ENCODE measurements at regions of chr6 and their contacts with region 1.

Region 1: DNA sequence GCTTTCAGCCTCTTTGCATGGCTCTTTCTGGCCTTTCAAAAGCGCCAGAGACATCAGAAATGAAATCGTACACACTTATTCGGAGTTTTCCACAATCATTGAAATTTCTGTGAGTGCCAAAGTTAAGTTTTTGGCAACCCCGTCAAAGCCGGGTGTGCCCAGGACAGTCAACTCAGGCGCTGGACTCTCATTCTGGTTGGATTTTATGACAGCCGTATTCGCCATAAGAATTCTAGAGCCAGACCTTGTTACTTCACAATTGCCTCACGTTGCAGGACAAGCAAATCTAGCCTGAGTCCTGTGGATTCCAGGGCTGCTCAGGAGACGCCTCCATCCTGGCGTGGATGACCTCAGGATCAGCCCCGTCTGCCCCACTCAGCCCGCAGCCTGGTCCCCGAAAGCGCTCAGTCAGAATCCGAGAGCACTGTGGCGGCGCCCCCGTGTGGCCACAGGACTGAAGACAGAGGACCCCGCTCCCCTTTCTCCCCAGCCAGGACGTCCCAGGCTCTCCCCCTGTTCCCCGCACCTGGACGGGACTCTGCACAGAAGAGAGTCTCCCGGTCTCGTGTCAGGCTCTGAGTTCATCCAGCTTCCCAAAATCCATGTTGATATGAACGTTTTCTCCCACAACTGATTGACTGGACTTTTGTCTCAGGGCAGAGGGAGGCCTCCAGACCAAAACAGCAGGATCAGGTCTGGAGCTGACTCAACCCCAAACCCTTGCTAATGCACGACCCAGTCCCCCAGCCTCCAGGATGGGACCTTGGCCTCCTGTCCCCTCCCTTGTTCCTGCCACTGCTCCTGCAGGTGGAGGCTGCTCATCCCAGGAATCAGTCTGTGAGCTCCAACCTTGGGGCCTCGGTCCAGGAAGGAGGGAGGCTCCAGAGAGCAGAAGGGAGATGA is 38.2 kb downstream of the MICA start:
- DNase-seq: peak in 1 of 2 donors; percentile 92
- H3K4me3 ChIP-seq: peak overlapping the region in 1 of 2 donors; percentile 44
- H3K27ac ChIP-seq: no peak overlapping the region
- H3K4me1 ChIP-seq: no peaks in the 10 kb centered on the region
- H3K27me3 ChIP-seq: no peaks in the 10 kb centered on the region
- CTCF ChIP-seq: peak; percentile 72 to 89 (median 77)

Region 2: DNA sequence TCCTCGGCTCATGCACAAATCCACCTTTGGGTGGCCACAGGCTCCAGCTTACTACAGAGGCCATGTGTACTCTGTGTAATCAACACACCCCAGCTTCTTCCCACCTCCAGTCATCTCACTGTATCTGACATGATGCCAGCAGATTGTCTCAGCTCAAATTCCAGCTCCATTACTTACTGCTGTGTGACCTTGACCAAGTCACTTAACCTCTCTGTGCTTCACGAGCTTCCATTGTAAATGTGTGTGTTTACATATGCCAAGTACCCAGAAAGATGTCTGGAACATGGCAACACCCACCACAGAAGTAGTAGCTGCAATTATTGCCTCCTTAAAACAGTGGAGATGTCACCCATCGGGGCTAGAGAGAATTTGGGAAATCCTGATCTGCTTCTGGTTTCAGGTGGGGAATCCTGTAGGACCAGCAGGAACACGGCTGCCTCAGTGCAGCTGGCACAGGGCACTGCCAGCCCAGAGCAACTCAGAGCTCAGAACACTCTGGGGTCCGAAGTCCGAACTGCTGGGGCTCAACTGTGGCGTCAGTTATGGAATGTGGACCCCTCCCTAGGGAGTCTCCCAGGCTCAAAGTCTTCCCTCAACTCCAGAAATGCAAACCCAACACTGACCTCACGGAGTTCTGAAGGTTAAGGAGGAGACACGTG is 63.4 kb before region 1 on chr6:
- intact Hi-C with region 1: no loop called
- DNase-seq: no peak
- H3K4me3 ChIP-seq: no peak overlapping the region
- H3K27ac ChIP-seq: no peak overlapping the region
- H3K4me1 ChIP-seq: no peaks in the 10 kb centered on the region
- H3K27me3 ChIP-seq: no peaks in the 10 kb centered on the region
- CTCF ChIP-seq: no peak

Region 3: GRCh38 chr6:31396422-31397152 is 45.0 kb before region 1 on chr6:
- intact Hi-C with region 1: loop called (anchors 1 kb)
- DNase-seq: peak in 1 of 2 donors; percentile 87
- H3K4me3 ChIP-seq: peak overlapping the region in 1 of 2 donors; percentile 20
- H3K27ac ChIP-seq: no peak overlapping the region
- H3K4me1 ChIP-seq: peaks cover 0 to 4% of the 10 kb centered on the region in 2 donors
- H3K27me3 ChIP-seq: no peaks in the 10 kb centered on the region
- CTCF ChIP-seq: peak; percentile 90 to 97 (median 95)

Measured in ascending aorta (tissue), 2 donors.